Naive thymus-derived CD4-positive, alpha-beta T cell (primary cell): ENCODE measurements at regions of chr12 and their contacts with region 1.

Region 1: GRCh38 chr12:47268501-47269454 is 189.0 kb upstream of the AMIGO2 start:
- DNase-seq: no peak
- ATAC-seq: no peak
- H3K4me3 ChIP-seq: no peak overlapping the region
- H3K4me3 Mint-ChIP-seq: peak overlapping the region in 6 of 10 donors; percentile 12 to 80 (median 24)
- H3K27ac ChIP-seq: no peak overlapping the region
- H3K27ac Mint-ChIP-seq: peak overlapping the region in 8 of 9 donors; percentile 35 to 92 (median 70)
- H3K4me1 ChIP-seq: peaks cover 9 to 55% of the 10 kb centered on the region in 2 donors
- H3K4me1 Mint-ChIP-seq: peaks cover 47 to 91% (median 86%) of the 10 kb centered on the region in 7 donors
- H3K27me3 ChIP-seq: no peaks in the 10 kb centered on the region
- H3K27me3 Mint-ChIP-seq: no peaks in the 10 kb centered on the region

Region 2: GRCh38 chr12:47184812-47185211 is 84.0 kb before region 1 on chr12:
- CTCF ChIA-PET with region 1: no interaction called
- POLR2A ChIA-PET with region 1: no interaction called
- intact Hi-C with region 1: no loop called
- DNase-seq: no peak
- ATAC-seq: no peak
- H3K4me3 ChIP-seq: no peak overlapping the region
- H3K4me3 Mint-ChIP-seq: no peak overlapping the region
- H3K27ac ChIP-seq: no peak overlapping the region
- H3K27ac Mint-ChIP-seq: peak overlapping the region in 4 of 9 donors; percentile 8 to 96 (median 41)
- H3K4me1 ChIP-seq: peaks cover 4 to 27% of the 10 kb centered on the region in 2 donors
- H3K4me1 Mint-ChIP-seq: peaks cover 22 to 81% (median 74%) of the 10 kb centered on the region in 7 donors
- H3K27me3 ChIP-seq: no peaks in the 10 kb centered on the region
- H3K27me3 Mint-ChIP-seq: no peaks in the 10 kb centered on the region

Region 3: DNA sequence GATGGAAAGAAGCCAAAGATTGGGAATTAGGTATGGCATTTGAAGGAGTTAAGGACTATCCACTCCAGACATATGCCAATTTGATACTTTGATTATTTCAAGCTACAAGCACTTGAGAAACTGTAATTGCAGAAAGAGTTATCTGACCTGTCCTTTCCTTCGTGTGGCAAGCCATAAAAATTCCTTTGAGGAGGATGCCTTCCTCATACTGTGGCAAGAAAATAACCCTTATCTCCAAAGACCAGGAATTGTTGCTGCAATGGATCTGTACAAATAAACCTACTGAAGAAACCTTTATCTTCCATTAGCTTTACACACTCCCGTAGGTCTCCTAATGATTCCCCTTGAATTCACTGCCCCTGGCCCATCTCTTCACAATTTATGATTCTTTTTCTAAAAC is 23.9 kb before region 1 on chr12:
- CTCF ChIA-PET with region 1: interaction called, 3 read pairs
- POLR2A ChIA-PET with region 1: interaction called, 6 read pairs
- intact Hi-C with region 1: loop called in 1 of 2 experiments (anchors 2 kb)
- DNase-seq: no peak
- ATAC-seq: no peak
- H3K4me3 ChIP-seq: no peak overlapping the region
- H3K4me3 Mint-ChIP-seq: peak overlapping the region in 1 of 10 donors; percentile 23
- H3K27ac ChIP-seq: no peak overlapping the region
- H3K27ac Mint-ChIP-seq: peak overlapping the region in 2 of 9 donors; percentile 14 to 17
- H3K4me1 ChIP-seq: peaks cover 0 to 7% of the 10 kb centered on the region in 2 donors
- H3K4me1 Mint-ChIP-seq: peaks cover 11 to 58% (median 39%) of the 10 kb centered on the region in 7 donors
- H3K27me3 ChIP-seq: no peaks in the 10 kb centered on the region
- H3K27me3 Mint-ChIP-seq: no peaks in the 10 kb centered on the region